Panc1 (cell line): ENCODE measurements at regions of chr1 and their contacts with region 1.

Region 1: DNA sequence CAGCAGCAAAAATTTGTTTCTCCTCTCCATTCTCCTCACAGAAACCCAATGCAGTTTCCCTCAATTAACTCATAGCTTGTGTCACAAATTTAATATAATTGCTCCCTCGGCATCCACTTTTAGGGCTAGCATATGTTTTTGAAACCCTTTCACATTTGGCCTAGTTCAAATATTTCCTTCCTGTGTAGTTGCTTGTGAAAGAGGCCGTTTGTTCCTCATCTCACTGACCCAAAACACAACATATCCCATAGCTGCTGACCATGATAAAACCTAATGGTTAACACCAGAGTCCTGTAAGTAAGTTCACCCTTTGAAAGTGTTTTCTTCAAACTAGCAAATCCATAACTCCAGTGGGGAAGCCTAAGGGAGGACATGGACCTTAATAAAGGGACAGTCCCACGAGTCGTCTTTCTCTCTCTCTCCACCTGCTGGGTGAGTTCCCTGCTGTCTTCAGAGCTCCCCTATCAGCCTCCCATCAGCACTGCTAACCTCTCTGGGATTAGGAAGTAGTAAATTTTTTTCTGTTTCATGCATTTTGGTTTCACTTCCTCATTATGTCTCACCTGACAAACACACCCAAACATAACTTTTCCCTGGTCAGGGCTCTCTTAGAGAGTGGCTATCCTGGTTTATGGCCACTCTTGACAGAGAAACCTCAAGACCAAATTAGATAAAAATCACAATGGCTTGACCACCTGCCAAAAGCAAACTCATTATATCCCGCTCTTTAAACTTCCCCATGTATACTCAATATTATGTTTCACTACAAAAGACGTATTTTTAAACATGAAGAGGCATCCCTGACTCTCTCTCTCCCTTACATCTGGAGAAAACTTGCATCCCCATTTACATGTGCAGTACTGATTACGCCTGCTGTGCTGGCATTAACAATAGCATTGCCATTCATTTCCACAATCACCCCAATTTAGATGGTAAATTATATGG is 177.7 kb upstream of the HP1BP3 start:
- DNase-seq: no peak
- ATAC-seq: no peak; the same call in 1 of the 2 replicates
- H3K4me3 ChIP-seq: no peak overlapping the region
- H3K27ac ChIP-seq: no peak overlapping the region
- H3K4me1 ChIP-seq: no peaks in the 10 kb centered on the region
- H3K27me3 ChIP-seq: no peaks in the 10 kb centered on the region
- CTCF ChIP-seq: no peak

Region 2: GRCh38 chr1:20885121-20885520 is 79.7 kb before region 1 on chr1:
- CTCF ChIA-PET with region 1: no interaction called
- POLR2A ChIA-PET with region 1: interaction called, 11 read pairs
- in situ Hi-C with region 1: no loop called
- intact Hi-C with region 1: no loop called
- DNase-seq: no peak
- ATAC-seq: no peak
- H3K4me3 ChIP-seq: no peak overlapping the region
- H3K27ac ChIP-seq: no peak overlapping the region
- H3K4me1 ChIP-seq: no peaks in the 10 kb centered on the region; the same call in 1 of the 2 replicates
- H3K27me3 ChIP-seq: no peaks in the 10 kb centered on the region
- CTCF ChIP-seq: no peak